ENCODE measurements at regions of chr7 and their contacts with region 1.

Region 1: GRCh38 chr7:43925984-43926797 is at the start of gene UBE2D4:
- DNase-seq: peak; percentile 71 to 93 (median 90)
- ATAC-seq: peak; percentile 88
- H3K4me3 ChIP-seq: peak within 1 kb of the TSS; percentile 52 to 64
- H3K4me3 Mint-ChIP-seq: peak within 1 kb of the TSS; percentile 89
- H3K27ac ChIP-seq: peak within 1 kb of the TSS; percentile 91 to 92
- H3K27ac Mint-ChIP-seq: peak within 1 kb of the TSS; percentile 98
- H3K4me1 ChIP-seq: peaks cover 24% of the 10 kb centered on the region
- H3K4me1 Mint-ChIP-seq: peaks cover 41% of the 10 kb centered on the region
- H3K27me3 ChIP-seq: no peaks in the 10 kb centered on the region
- H3K27me3 Mint-ChIP-seq: no peaks in the 10 kb centered on the region
- CTCF ChIP-seq: no peak
- total RNA-seq, gene UBE2D4: 6.8 to 8.4 TPM

Region 2: DNA sequence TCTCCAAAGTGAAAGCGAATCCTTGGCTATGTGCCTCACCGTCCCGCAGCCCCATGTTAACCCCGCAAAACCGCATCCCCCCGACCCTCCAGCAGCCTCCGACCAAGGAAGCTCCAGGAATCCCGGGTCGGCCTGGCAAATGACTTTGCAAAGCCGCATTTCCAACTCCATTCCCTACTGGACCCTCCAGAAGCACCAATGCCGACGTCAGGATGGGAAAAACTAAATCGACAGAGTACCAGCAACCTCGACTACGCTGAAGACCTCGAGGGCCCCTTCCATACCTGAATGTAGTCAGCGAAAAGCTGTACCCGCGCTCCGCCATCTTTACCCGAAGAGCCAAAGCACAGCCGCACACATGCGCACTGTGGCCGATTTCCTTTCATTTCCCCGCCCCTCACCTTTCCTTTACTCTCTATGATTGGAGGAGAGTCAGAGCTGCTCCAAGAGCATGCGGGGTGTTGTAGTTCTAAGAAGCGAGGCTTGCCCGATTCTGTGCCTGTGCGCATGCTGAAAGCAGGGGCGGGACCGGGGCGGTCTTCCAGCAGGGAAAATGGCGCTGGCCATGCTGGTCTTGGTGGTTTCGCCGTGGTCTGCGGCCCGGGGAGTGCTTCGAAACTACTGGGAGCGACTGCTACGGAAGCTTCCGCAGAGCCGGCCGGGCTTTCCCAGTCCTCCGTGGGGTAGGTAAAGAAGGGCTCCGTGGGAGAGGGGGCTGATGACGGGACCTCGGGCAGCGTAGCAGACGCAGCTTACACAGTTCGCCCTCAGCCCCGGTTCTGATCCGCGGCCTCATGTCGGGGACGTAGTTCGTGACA is 994.1 kb before region 1 on chr7 and contains the starts of genes MRPL32 and PSMA2:
- CTCF ChIA-PET with region 1: no interaction called
- POLR2A ChIA-PET with region 1: no interaction called
- intact Hi-C with region 1: loop called in 1 of 2 experiments (anchors 5 kb)
- DNase-seq: peak; percentile 89 to 98 (median 93)
- ATAC-seq: peak; percentile 98
- H3K4me3 ChIP-seq: peak within 1 kb of the TSS; percentile 93 to 98
- H3K4me3 Mint-ChIP-seq: peak within 1 kb of the TSS; percentile 100
- H3K27ac ChIP-seq: peak within 1 kb of the TSS; percentile 87 to 91
- H3K27ac Mint-ChIP-seq: peak within 1 kb of the TSS; percentile 98
- H3K4me1 ChIP-seq: peaks cover 45% of the 10 kb centered on the region
- H3K4me1 Mint-ChIP-seq: peaks cover 79% of the 10 kb centered on the region
- H3K27me3 ChIP-seq: no peaks in the 10 kb centered on the region
- H3K27me3 Mint-ChIP-seq: no peaks in the 10 kb centered on the region
- CTCF ChIP-seq: no peak
- total RNA-seq, gene MRPL32: 64.9 to 65.1 TPM
- total RNA-seq, gene PSMA2: 43.6 to 47.9 TPM

Region 3: DNA sequence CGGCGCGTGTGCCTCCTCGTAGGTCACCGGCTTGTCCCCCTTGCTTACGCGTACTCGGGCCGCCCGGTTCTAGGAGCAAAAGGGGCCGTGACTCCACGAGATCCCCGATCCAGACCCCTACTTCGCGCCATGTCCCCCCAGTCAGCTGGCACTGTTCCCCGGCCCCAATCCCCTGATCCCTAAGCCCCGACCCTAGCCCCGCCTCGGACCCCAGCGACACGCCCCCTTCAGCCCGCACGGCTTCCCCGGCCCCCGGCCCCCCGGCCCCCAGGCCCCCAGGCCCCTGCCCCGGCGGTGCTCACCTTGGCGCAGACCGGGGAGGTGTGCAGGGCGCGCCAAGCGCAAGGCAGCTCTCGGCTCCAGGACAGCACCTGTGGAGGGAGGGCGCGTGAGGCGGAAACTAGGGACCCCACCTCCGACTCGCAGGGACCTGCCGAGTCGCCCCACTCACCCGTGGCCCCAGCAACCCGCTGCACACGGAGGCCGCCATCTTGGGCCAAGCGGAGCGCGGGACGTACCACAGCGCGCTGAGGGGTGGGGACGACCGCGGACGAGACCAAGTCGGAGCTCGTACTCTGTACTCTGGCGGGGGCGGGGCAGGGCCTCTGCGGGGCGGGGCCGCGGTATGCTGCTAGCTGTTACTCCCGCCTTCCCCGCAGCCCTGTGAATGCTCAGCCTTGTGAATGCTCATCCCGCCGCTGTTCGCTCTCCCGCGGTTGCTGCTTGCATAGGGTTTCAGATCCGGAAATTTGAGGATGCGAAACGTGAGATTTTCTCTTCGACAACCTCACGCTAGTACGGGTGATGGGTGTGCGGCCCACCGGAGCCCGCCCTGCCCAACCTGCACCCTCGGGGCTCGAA is 57.0 kb before region 1 on chr7 and contains the start of gene MRPS24:
- CTCF ChIA-PET with region 1: no interaction called
- POLR2A ChIA-PET with region 1: interaction called, 6 read pairs
- intact Hi-C with region 1: loop called (anchors 1 kb)
- DNase-seq: peak; percentile 91 to 97 (median 95)
- ATAC-seq: peak; percentile 100
- H3K4me3 ChIP-seq: peak within 1 kb of the TSS; percentile 69 to 76
- H3K4me3 Mint-ChIP-seq: peak within 1 kb of the TSS; percentile 94
- H3K27ac ChIP-seq: peak within 1 kb of the TSS; percentile 50 to 69
- H3K27ac Mint-ChIP-seq: peak within 1 kb of the TSS; percentile 93
- H3K4me1 ChIP-seq: peaks cover 14% of the 10 kb centered on the region
- H3K4me1 Mint-ChIP-seq: peaks cover 23% of the 10 kb centered on the region
- H3K27me3 ChIP-seq: no peaks in the 10 kb centered on the region
- H3K27me3 Mint-ChIP-seq: no peaks in the 10 kb centered on the region
- CTCF ChIP-seq: no peak
- total RNA-seq, gene MRPS24: 61.7 to 74.4 TPM

Region 4: DNA sequence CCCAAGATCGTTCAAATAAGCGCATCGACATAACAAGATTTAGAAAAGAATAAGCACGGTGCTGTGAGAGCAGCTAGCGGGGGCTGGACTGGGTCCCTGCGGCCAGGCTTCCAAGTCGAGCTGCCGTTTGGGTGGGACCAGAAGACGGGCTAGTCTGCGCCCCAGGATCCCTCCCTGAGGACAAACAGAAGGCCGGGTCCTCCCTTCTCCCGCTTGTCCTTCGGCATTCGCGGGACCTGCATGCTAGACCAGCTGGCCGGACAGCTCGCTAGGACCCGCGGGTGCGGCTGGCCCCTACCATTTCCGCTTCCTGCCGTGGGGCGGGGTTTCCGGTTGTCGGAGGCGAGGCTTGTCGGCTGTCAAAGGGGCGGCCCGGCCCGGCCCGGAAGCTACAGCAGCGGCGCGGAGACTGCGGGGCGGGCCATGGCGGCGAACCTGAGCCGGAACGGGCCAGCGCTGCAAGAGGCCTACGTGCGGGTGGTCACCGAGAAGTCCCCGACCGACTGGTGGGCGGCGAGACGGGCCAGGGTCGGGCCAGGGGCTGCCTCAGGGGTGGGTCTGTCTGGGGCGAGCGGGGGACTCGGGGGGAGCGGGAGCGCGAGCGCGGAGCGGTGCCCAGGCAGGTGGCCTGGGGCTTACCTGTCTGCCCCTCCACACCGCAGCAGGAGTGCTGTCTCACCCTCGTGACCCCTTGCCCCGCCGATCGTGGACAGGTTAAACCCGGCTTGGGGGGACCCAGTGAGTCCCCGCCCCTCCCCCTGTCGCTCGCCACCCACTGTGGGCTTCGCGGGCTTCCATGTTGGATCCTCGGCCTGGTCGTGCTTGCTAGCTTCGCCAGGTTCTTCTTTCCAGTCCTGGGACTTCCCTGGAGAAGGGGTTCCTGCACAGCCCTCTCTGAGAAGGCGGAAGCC is 118.4 kb after region 1 on chr7 and contains the start of gene DBNL:
- CTCF ChIA-PET with region 1: no interaction called
- POLR2A ChIA-PET with region 1: no interaction called
- intact Hi-C with region 1: loop called in 1 of 2 experiments (anchors 5 kb)
- DNase-seq: peak; percentile 66 to 95 (median 88)
- ATAC-seq: peak; percentile 48
- H3K4me3 ChIP-seq: peak within 1 kb of the TSS; percentile 76 to 78
- H3K4me3 Mint-ChIP-seq: peak within 1 kb of the TSS; percentile 91
- H3K27ac ChIP-seq: peak within 1 kb of the TSS; percentile 73 to 91
- H3K27ac Mint-ChIP-seq: peak within 1 kb of the TSS; percentile 97
- H3K4me1 ChIP-seq: peaks cover 49% of the 10 kb centered on the region
- H3K4me1 Mint-ChIP-seq: peaks cover 50% of the 10 kb centered on the region
- H3K27me3 ChIP-seq: no peaks in the 10 kb centered on the region
- H3K27me3 Mint-ChIP-seq: no peaks in the 10 kb centered on the region
- CTCF ChIP-seq: no peak
- total RNA-seq, gene DBNL: 82.1 to 84.8 TPM

Region 5: GRCh38 chr7:44123190-44124003 is 197.2 kb after region 1 on chr7 and contains the start of gene POLD2:
- CTCF ChIA-PET with region 1: no interaction called
- POLR2A ChIA-PET with region 1: no interaction called
- intact Hi-C with region 1: loop called in 1 of 2 experiments (anchors 1 kb)
- DNase-seq: peak; percentile 93 to 98 (median 97)
- ATAC-seq: peak; percentile 98
- H3K4me3 ChIP-seq: peak within 1 kb of the TSS; percentile 78 to 83
- H3K4me3 Mint-ChIP-seq: peak within 1 kb of the TSS; percentile 93
- H3K27ac ChIP-seq: peak within 1 kb of the TSS; percentile 75 to 79
- H3K27ac Mint-ChIP-seq: peak within 1 kb of the TSS; percentile 66
- H3K4me1 ChIP-seq: peaks cover 12% of the 10 kb centered on the region
- H3K4me1 Mint-ChIP-seq: peaks cover 34% of the 10 kb centered on the region
- H3K27me3 ChIP-seq: no peaks in the 10 kb centered on the region
- H3K27me3 Mint-ChIP-seq: no peaks in the 10 kb centered on the region
- CTCF ChIP-seq: no peak
- total RNA-seq, gene POLD2: 44.0 to 48.9 TPM

Region 6: GRCh38 chr7:44172803-44173424 is 246.7 kb after region 1 on chr7:
- CTCF ChIA-PET with region 1: no interaction called
- POLR2A ChIA-PET with region 1: no interaction called
- intact Hi-C with region 1: no loop called
- DNase-seq: no peak
- ATAC-seq: no peak
- H3K4me3 ChIP-seq: no peak overlapping the region
- H3K4me3 Mint-ChIP-seq: no peak overlapping the region
- H3K27ac ChIP-seq: no peak overlapping the region
- H3K27ac Mint-ChIP-seq: no peak overlapping the region
- H3K4me1 ChIP-seq: no peaks in the 10 kb centered on the region
- H3K4me1 Mint-ChIP-seq: peaks cover 4% of the 10 kb centered on the region
- H3K27me3 ChIP-seq: no peaks in the 10 kb centered on the region
- H3K27me3 Mint-ChIP-seq: peaks cover 14% of the 10 kb centered on the region
- CTCF ChIP-seq: no peak

Region 7: DNA sequence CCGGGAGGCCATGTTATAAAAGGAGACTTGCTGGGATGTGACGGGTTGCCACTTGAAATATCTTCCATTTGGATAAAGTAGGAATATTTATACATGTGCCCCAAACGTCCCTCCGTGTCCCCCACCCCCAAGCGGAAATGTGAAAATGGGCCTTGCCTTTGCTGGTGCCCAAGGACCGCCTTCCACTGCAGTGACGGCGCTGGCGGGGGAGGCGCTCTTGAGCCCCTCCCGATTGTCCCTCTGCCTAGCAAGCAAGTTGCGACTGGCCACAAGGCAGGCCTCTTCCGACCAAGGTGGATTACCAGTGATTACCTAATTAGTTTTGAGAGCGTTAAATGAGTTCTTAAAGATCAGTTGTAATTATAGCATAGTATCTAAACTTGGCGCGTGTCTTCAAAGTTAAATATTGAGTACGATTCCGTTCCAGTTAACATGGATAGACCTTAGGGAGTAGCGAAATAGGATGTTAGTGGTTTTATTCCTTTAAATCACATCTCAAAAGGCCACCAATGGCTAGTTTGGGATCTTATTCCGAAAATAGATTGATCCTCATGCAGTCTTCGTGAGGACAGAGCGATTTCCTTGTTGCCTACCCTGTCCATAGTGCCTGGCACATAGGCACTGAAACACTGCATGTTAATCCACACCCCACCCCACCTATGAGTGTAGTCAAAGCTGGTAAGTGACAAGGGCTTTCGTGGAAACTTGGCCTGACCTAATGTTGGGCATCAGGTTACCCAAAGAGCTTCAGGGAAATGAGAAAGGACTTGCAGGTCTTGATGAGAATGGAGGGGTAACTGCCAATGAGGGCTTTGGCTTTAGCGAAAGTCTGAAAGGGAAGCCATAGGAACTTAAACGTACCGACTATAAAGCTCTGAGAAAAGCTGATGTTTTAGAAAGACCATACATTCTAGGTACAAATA is 871.4 kb after region 1 on chr7:
- CTCF ChIA-PET with region 1: no interaction called
- POLR2A ChIA-PET with region 1: no interaction called
- intact Hi-C with region 1: loop called in 1 of 2 experiments (anchors 5 kb)
- DNase-seq: peak; percentile 64 to 92 (median 82)
- ATAC-seq: peak; percentile 61
- H3K4me3 ChIP-seq: peak overlapping the region; percentile 97 to 98
- H3K4me3 Mint-ChIP-seq: peak overlapping the region; percentile 92
- H3K27ac ChIP-seq: peak overlapping the region; percentile 97 to 99
- H3K27ac Mint-ChIP-seq: peak overlapping the region; percentile 96
- H3K4me1 ChIP-seq: peaks cover 22% of the 10 kb centered on the region
- H3K4me1 Mint-ChIP-seq: peaks cover 44% of the 10 kb centered on the region
- H3K27me3 ChIP-seq: no peaks in the 10 kb centered on the region
- H3K27me3 Mint-ChIP-seq: no peaks in the 10 kb centered on the region
- CTCF ChIP-seq: no peak